ENCODE measurements at regions of chr17 and their contacts with region 1.

Region 1: GRCh38 chr17:4980644-4981216 is 6.7 kb downstream of the CAMTA2 start:
- DNase-seq: peak; percentile 56
- H3K4me3 ChIP-seq: no peak overlapping the region
- H3K27ac ChIP-seq: no peak overlapping the region
- H3K4me1 ChIP-seq: no peaks in the 10 kb centered on the region
- H3K27me3 ChIP-seq: no peaks in the 10 kb centered on the region
- CTCF ChIP-seq: peak; percentile 78

Region 2: GRCh38 chr17:5055543-5055942 is 74.8 kb after region 1 on chr17:
- intact Hi-C with region 1: loop called (anchors 5 kb)
- DNase-seq: no peak
- H3K4me3 ChIP-seq: no peak overlapping the region
- H3K27ac ChIP-seq: no peak overlapping the region
- H3K4me1 ChIP-seq: no peaks in the 10 kb centered on the region
- H3K27me3 ChIP-seq: no peaks in the 10 kb centered on the region
- CTCF ChIP-seq: no peak